ENCODE measurements at regions of chr10 and their contacts with region 1.

Region 1: GRCh38 chr10:92087750-92088395 is 164.3 kb downstream of the BTAF1 start:
- DNase-seq: peak; percentile 55 to 75
- ATAC-seq: peak; percentile 100

Region 2: GRCh38 chr10:92290837-92291615 is 203.2 kb after region 1 on chr10 and contains the starts of genes CPEB3 and MARCHF5:
- intact Hi-C with region 1: loop called in 1 of 2 experiments (anchors 5 kb)
- DNase-seq: peak; percentile 97
- ATAC-seq: peak; percentile 97
- total RNA-seq, gene CPEB3: 6.9 to 9.9 TPM
- total RNA-seq, gene MARCHF5: 35.9 to 42.6 TPM

Region 3: GRCh38 chr10:92432596-92432995 is 344.7 kb after region 1 on chr10:
- intact Hi-C with region 1: loop called (anchors 5 to 10 kb)
- DNase-seq: no peak
- ATAC-seq: no peak

Measured in left colon (tissue), 2 donors.